Activated CD4-positive, alpha-beta T cell treated with anti-CD3 and anti-CD28 coated beads, Interleukin-2, amount 10 ng/mL, durations not matched to agents 24 days and 14 days (primary cell): ENCODE measurements at regions of chr7 and their contacts with region 1.

Region 1: GRCh38 chr7:76262683-76263402 is 39.6 kb upstream of the HSPB1 start:
- DNase-seq: peak; percentile 80
- H3K4me3 Mint-ChIP-seq: no peak overlapping the region
- H3K27ac Mint-ChIP-seq: no peak overlapping the region
- H3K4me1 Mint-ChIP-seq: peaks cover 2% of the 10 kb centered on the region
- H3K27me3 Mint-ChIP-seq: peaks cover 22% of the 10 kb centered on the region

Region 2: GRCh38 chr7:76179686-76180085 is 83.2 kb before region 1 on chr7:
- intact Hi-C with region 1: loop called (anchors 1 kb)
- DNase-seq: no peak
- H3K4me3 Mint-ChIP-seq: no peak overlapping the region
- H3K27ac Mint-ChIP-seq: no peak overlapping the region
- H3K4me1 Mint-ChIP-seq: peaks cover 3% of the 10 kb centered on the region
- H3K27me3 Mint-ChIP-seq: no peaks in the 10 kb centered on the region

Region 3: DNA sequence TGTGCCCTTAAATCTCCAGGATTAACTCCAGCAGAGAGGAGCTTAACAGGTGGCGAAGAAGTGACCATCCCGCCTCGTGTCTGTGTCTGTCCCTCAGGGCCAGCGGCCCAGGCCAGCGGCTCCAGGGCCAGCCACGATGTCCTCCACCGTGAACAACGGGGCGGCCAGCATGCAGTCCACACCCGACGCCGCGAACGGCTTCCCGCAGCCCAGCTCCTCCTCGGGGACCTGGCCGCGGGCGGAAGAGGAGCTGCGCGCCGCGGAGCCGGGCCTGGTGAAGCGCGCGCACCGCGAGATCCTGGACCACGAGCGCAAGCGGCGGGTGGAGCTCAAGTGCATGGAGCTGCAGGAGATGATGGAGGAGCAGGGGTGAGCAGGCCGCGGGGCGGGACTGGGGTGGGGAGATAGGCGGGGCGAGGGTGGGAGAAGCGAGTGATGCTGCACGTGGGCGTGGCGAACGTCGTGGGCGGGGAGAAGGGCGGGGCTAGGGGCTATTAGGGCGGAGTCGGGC is 27.9 kb before region 1 on chr7:
- intact Hi-C with region 1: loop called (anchors 1 kb)
- DNase-seq: peak; percentile 94
- H3K4me3 Mint-ChIP-seq: peak overlapping the region; percentile 64
- H3K27ac Mint-ChIP-seq: no peak overlapping the region
- H3K4me1 Mint-ChIP-seq: peaks cover 8% of the 10 kb centered on the region
- H3K27me3 Mint-ChIP-seq: peaks cover 41% of the 10 kb centered on the region